HepG2 (cell line): ENCODE measurements at regions of chr6 and their contacts with region 1.

Region 1: GRCh38 chr6:29887819-29888776 is 54.2 kb upstream of the HLA-A start:
- DNase-seq: no peak
- ATAC-seq: peak; percentile 31
- H3K4me3 ChIP-seq: peak overlapping the region; percentile 62 to 75 (median 65); a peak in 5 of 6 replicates
- H3K27ac ChIP-seq: no peak overlapping the region
- H3K4me1 ChIP-seq: peaks cover 11% of the 10 kb centered on the region
- H3K27me3 ChIP-seq: no peaks in the 10 kb centered on the region
- CTCF ChIP-seq: no peak
- EP300 ChIP-seq: no peak
- POLR2A ChIP-seq: no peak
- RAD21 ChIP-seq: no peak

Region 2: DNA sequence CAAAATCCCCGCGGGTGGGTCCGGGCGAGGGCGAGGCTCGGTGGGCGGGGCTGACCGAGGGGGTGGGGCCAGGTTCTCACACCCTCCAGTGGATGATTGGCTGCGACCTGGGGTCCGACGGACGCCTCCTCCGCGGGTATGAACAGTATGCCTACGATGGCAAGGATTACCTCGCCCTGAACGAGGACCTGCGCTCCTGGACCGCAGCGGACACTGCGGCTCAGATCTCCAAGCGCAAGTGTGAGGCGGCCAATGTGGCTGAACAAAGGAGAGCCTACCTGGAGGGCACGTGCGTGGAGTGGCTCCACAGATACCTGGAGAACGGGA is 59.7 kb before region 1 on chr6:
- CTCF ChIA-PET with region 1: no interaction called
- POLR2A ChIA-PET with region 1: no interaction called
- in situ Hi-C with region 1: no loop called
- intact Hi-C with region 1: no loop called
- DNase-seq: no peak
- ATAC-seq: no peak
- H3K4me3 ChIP-seq: no peak overlapping the region
- H3K27ac ChIP-seq: no peak overlapping the region
- H3K4me1 ChIP-seq: no peaks in the 10 kb centered on the region
- H3K27me3 ChIP-seq: peaks cover 4 to 8% of the 10 kb centered on the region in 2 experiments; a peak in 2 of 5 replicates
- CTCF ChIP-seq: no peak
- EP300 ChIP-seq: no peak
- POLR2A ChIP-seq: no peak
- RAD21 ChIP-seq: no peak

Region 3: GRCh38 chr6:31366693-31367470 is 1478.8 kb after region 1 on chr6:
- CTCF ChIA-PET with region 1: no interaction called
- POLR2A ChIA-PET with region 1: no interaction called
- in situ Hi-C with region 1: loop called (anchors 25 kb)
- intact Hi-C with region 1: no loop called
- DNase-seq: peak; percentile 80
- ATAC-seq: peak; percentile 100
- H3K4me3 ChIP-seq: peak overlapping the region in 1 of 3 experiments; percentile 47; a peak in 1 of 6 replicates
- H3K27ac ChIP-seq: no peak overlapping the region
- H3K4me1 ChIP-seq: 0 out of 2 replicates have a peak, but pooled peaks cover 9% of the 10 kb centered on the region
- H3K27me3 ChIP-seq: peaks cover 2 to 20% of the 10 kb centered on the region in 2 experiments; a peak in 4 of 5 replicates
- CTCF ChIP-seq: peak; percentile 98
- EP300 ChIP-seq: no peak
- POLR2A ChIP-seq: no peak
- RAD21 ChIP-seq: peak; percentile 99